ENCODE measurements at regions of chr17 and their contacts with region 1.

Region 1: DNA sequence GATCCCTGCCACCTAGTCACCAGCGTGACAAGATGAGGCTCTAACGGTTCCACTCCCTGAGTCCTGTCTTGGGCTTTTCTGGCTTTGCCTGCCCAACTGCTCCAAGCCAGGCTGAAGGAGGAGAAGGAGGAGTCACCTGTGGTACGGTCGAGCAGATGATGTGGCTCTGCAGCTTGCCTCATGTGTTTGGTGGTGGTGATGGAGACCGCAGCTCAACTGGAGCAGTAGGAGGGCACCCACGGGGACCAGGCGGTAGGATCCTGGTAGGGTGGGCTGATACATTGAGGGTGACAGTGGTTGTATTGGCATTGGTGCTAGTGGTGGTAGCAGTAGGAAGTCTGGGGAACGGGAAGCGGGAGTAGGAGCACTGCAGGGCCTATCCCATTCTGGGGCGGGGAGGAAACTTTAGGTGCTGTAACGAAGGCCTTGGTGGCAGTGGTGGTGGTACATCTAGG is 202.8 kb upstream of the WSB1 start:
- DNase-seq: peak in 1 of 4 experiments; percentile 60
- ATAC-seq: 0 out of 3 replicates have a peak, but pooled peaks have one; percentile 4
- H3K4me3 ChIP-seq: peak overlapping the region; percentile 80
- H3K27ac ChIP-seq: peak overlapping the region; percentile 88
- H3K4me1 ChIP-seq: peaks cover 3 to 4% of the 10 kb centered on the region in 2 experiments; a peak in 2 of 5 replicates
- H3K27me3 ChIP-seq: no peaks in the 10 kb centered on the region
- CTCF ChIP-seq: no peak
- EP300 ChIP-seq: no peak
- POLR2A ChIP-seq: 0 out of 2 replicates have a peak, but pooled peaks have one; percentile 20
- RAD21 ChIP-seq: no peak

Region 2: DNA sequence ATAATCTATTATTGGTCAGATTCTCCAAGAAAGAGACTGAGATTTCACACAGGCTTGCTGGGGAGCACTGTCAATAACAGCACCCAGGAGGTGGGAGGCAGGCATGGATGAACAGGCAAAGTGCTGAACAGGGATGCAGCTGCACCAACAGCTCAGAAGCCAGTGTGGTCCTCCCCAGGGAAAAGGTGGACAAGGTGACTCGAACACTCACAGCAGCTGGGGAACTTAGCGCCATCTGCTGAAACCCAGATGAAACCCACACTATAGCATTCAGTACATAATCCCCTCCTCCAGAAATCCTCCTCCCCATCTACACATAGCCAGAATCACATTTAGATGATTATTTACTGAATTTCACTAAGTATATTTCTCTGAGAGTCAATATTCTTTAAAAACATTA is 52.4 kb before region 1 on chr17:
- CTCF ChIA-PET with region 1: no interaction called
- POLR2A ChIA-PET with region 1: no interaction called
- in situ Hi-C with region 1: no loop called
- intact Hi-C with region 1: loop called (anchors 10 kb)
- DNase-seq: peak; percentile 12 to 48 (median 28)
- ATAC-seq: peak; percentile 92
- H3K4me3 ChIP-seq: no peak overlapping the region
- H3K27ac ChIP-seq: no peak overlapping the region
- H3K4me1 ChIP-seq: no peaks in the 10 kb centered on the region
- H3K27me3 ChIP-seq: no peaks in the 10 kb centered on the region
- CTCF ChIP-seq: peak; percentile 26 to 54 (median 52); a peak in 5 of 6 replicates
- EP300 ChIP-seq: no peak
- POLR2A ChIP-seq: no peak
- RAD21 ChIP-seq: peak in 1 of 2 experiments; percentile 41; a peak in 2 of 4 replicates

Region 3: GRCh38 chr17:27078296-27078695 is 12.8 kb before region 1 on chr17:
- CTCF ChIA-PET with region 1: no interaction called
- POLR2A ChIA-PET with region 1: interaction called, 40 read pairs
- in situ Hi-C with region 1: no loop called
- intact Hi-C with region 1: no loop called
- DNase-seq: no peak
- ATAC-seq: no peak
- H3K4me3 ChIP-seq: no peak overlapping the region
- H3K27ac ChIP-seq: no peak overlapping the region
- H3K4me1 ChIP-seq: no peaks in the 10 kb centered on the region; a peak in 1 of 5 replicates
- H3K27me3 ChIP-seq: no peaks in the 10 kb centered on the region
- CTCF ChIP-seq: no peak
- EP300 ChIP-seq: no peak
- POLR2A ChIP-seq: peak; percentile 52; the same call in 1 of the 2 replicates
- RAD21 ChIP-seq: no peak

Region 4: DNA sequence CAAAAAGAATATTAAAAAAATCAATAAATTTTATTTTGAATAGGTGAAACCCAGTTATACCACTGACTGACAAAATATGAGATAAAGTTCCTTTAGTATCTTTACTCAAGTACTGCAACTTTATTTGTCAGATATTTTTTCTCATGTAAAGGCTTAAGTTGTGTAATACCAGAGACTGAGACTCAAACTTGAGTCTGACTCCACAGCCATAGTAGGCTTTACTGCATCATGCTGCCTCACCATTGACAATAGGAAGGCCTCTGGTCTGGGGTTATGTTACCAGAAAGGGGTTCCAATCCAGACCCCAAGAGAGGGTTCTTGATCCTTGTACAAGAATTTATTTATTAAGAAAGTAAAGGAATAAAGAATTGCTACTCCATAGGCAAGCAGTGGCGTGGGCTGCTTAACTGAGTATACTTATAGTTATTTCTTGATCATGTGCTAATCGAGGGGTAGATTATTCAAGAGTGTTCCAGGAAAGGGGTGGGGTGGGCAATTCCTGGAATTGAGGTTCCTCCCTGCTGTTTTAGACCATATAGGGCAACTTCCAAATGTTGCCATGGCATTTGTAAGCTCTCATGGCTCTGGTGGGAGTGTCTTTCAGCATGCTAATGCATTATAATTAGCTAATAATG is 15.4 kb after region 1 on chr17:
- CTCF ChIA-PET with region 1: no interaction called
- POLR2A ChIA-PET with region 1: interaction called, 31 read pairs
- in situ Hi-C with region 1: no loop called
- intact Hi-C with region 1: no loop called
- DNase-seq: peak in 2 of 4 experiments; percentile 49 to 87
- ATAC-seq: peak; percentile 75
- H3K4me3 ChIP-seq: no peak overlapping the region
- H3K27ac ChIP-seq: peak overlapping the region; percentile 83
- H3K4me1 ChIP-seq: peaks cover 0 to 32% of the 10 kb centered on the region in 2 experiments; a peak in 4 of 5 replicates
- H3K27me3 ChIP-seq: no peaks in the 10 kb centered on the region
- CTCF ChIP-seq: no peak
- EP300 ChIP-seq: no peak
- POLR2A ChIP-seq: peak; percentile 45
- RAD21 ChIP-seq: no peak

Region 5: GRCh38 chr17:27153005-27153404 is 61.9 kb after region 1 on chr17:
- CTCF ChIA-PET with region 1: no interaction called
- POLR2A ChIA-PET with region 1: no interaction called
- in situ Hi-C with region 1: no loop called
- intact Hi-C with region 1: no loop called
- DNase-seq: peak in 1 of 4 experiments; percentile 4
- ATAC-seq: no peak
- H3K4me3 ChIP-seq: no peak overlapping the region
- H3K27ac ChIP-seq: no peak overlapping the region
- H3K4me1 ChIP-seq: no peaks in the 10 kb centered on the region
- H3K27me3 ChIP-seq: no peaks in the 10 kb centered on the region
- CTCF ChIP-seq: no peak
- EP300 ChIP-seq: no peak
- POLR2A ChIP-seq: no peak
- RAD21 ChIP-seq: no peak

Region 6: DNA sequence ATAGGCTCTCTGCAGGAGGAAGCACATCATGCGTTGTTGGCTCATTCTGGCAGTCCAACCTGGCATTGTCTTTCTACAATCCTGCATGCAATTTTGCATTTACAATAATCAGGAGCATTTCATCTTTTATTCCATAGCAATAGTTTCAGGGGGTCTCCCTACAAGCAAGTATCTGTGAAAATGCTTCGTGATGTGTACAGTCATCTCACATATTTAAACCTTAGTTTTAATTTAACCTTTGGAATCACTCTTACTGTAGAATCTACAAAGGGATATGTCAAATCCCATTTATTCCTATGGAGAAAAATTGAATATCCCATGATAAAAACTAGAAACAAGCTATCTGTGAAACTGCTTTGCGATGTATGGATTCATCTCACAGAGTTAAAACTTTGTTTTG is 90.9 kb after region 1 on chr17:
- CTCF ChIA-PET with region 1: no interaction called
- POLR2A ChIA-PET with region 1: interaction called, 3 read pairs
- in situ Hi-C with region 1: no loop called
- intact Hi-C with region 1: loop called (anchors 10 kb)
- DNase-seq: no peak
- ATAC-seq: no peak
- H3K4me3 ChIP-seq: no peak overlapping the region
- H3K27ac ChIP-seq: no peak overlapping the region
- H3K4me1 ChIP-seq: no peaks in the 10 kb centered on the region
- H3K27me3 ChIP-seq: no peaks in the 10 kb centered on the region
- CTCF ChIP-seq: no peak
- EP300 ChIP-seq: no peak
- POLR2A ChIP-seq: no peak
- RAD21 ChIP-seq: no peak

Region 7: GRCh38 chr17:27345141-27345904 is 254.3 kb after region 1 on chr17:
- CTCF ChIA-PET with region 1: no interaction called
- POLR2A ChIA-PET with region 1: interaction called, 15 read pairs
- in situ Hi-C with region 1: no loop called
- intact Hi-C with region 1: no loop called
- DNase-seq: peak; percentile 61 to 95 (median 76)
- ATAC-seq: peak; percentile 93
- H3K4me3 ChIP-seq: peak overlapping the region; percentile 40
- H3K27ac ChIP-seq: peak overlapping the region; percentile 95
- H3K4me1 ChIP-seq: peaks cover 25 to 48% of the 10 kb centered on the region in 2 experiments
- H3K27me3 ChIP-seq: no peaks in the 10 kb centered on the region
- CTCF ChIP-seq: no peak
- EP300 ChIP-seq: no peak; the same call in 1 of the 2 replicates
- POLR2A ChIP-seq: peak; percentile 92
- RAD21 ChIP-seq: no peak

Region 8: DNA sequence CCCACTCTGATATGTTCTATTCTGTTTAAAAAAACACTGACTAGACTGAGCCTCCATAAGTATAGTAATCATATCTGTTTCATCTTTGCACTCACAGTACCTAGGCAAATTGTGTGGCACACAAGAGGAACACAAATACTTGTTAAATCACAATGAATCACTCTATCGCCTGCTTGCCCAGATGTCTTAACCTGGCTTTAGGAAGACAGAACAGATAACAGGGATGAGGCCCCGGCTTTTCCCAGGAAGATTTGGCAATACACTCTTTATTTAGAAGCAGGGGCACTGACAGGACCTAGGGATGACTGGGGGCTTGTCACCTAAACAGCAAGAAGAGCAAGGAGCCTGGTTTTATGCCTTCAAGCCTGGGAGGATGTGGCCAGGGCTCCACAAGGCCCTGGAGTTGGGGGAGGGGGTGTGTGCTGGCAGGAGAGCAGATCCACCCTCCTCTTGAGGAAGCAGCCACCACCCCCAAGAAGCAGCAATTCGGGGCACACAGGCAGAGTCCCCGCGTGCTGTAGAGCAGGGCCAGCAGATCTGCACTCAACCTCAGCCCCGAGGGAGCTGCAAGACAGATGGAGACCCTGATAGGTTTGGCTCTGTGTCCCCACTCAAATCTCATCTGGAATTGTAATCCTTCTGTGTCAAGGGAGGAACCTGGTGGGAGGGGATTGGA is 324.2 kb after region 1 on chr17:
- CTCF ChIA-PET with region 1: no interaction called
- POLR2A ChIA-PET with region 1: no interaction called
- in situ Hi-C with region 1: no loop called
- intact Hi-C with region 1: no loop called
- DNase-seq: peak in 2 of 4 experiments; percentile 28 to 35
- ATAC-seq: peak; percentile 23
- H3K4me3 ChIP-seq: no peak overlapping the region
- H3K27ac ChIP-seq: no peak overlapping the region
- H3K4me1 ChIP-seq: peaks cover 0 to 6% of the 10 kb centered on the region in 2 experiments; a peak in 2 of 5 replicates
- H3K27me3 ChIP-seq: no peaks in the 10 kb centered on the region
- CTCF ChIP-seq: no peak
- EP300 ChIP-seq: no peak
- POLR2A ChIP-seq: no peak
- RAD21 ChIP-seq: no peak

Region 9: GRCh38 chr17:27578718-27579085 is 487.6 kb after region 1 on chr17:
- CTCF ChIA-PET with region 1: no interaction called
- POLR2A ChIA-PET with region 1: interaction called, 4 read pairs
- in situ Hi-C with region 1: no loop called
- intact Hi-C with region 1: loop called (anchors 10 kb)
- DNase-seq: peak; percentile 51 to 78 (median 56)
- ATAC-seq: no peak; the same call in 2 of the 3 replicates
- H3K4me3 ChIP-seq: no peak overlapping the region
- H3K27ac ChIP-seq: peak overlapping the region; percentile 92
- H3K4me1 ChIP-seq: peaks cover 45 to 68% of the 10 kb centered on the region in 2 experiments
- H3K27me3 ChIP-seq: no peaks in the 10 kb centered on the region
- CTCF ChIP-seq: 0 out of 6 replicates have a peak, but pooled peaks of 2 of the 3 experiments have one; percentile 26 to 32
- EP300 ChIP-seq: no peak
- POLR2A ChIP-seq: no peak
- RAD21 ChIP-seq: peak in 1 of 2 experiments; percentile 16; a peak in 1 of 4 replicates

Measured in K562 (cell line).